Endothelial cell of umbilical vein (primary cell): ENCODE measurements at regions of chr11 and their contacts with region 1.

Region 1: DNA sequence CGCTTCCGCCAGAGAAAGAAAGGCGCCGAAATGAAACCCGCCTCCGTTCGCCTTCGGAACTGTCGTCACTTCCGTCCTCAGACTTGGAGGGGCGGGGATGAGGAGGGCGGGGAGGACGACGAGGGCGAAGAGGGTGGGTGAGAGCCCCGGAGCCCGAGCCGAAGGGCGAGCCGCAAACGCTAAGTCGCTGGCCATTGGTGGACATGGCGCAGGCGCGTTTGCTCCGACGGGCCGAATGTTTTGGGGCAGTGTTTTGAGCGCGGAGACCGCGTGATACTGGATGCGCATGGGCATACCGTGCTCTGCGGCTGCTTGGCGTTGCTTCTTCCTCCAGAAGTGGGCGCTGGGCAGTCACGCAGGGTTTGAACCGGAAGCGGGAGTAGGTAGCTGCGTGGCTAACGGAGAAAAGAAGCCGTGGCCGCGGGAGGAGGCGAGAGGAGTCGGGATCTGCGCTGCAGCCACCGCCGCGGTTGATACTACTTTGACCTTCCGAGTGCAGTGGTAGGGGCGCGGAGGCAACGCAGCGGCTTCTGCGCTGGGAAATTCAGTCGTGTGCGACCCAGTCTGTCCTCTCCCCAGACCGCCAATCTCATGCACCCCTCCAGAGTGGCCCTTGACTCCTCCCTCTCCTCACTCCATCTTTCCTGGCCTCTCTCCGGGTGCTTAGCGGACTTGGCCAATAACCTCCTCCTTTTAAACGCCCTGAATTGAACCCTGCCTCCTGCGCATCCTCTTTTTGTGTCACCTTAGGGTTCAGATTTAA is at the start of gene ATM:
- DNase-seq: peak; percentile 100
- H3K4me3 ChIP-seq: peak within 1 kb of the TSS; percentile 43 to 88 (median 64)
- H3K27ac ChIP-seq: peak within 1 kb of the TSS; percentile 85
- H3K4me1 ChIP-seq: peaks cover 27% of the 10 kb centered on the region
- H3K27me3 ChIP-seq: no peaks in the 10 kb centered on the region
- CTCF ChIP-seq: peak; percentile 86 to 92
- POLR2A ChIP-seq: peak; percentile 87
- total RNA-seq, gene ATM: 49.7 and 52.1 TPM in 2 replicates

Region 2: GRCh38 chr11:107988397-107989158 is 234.3 kb before region 1 on chr11:
- CTCF ChIA-PET with region 1: no interaction called
- POLR2A ChIA-PET with region 1: no interaction called
- dilution Hi-C with region 1: no loop called
- intact Hi-C with region 1: no loop called
- DNase-seq: no peak
- H3K4me3 ChIP-seq: no peak overlapping the region
- H3K27ac ChIP-seq: no peak overlapping the region
- H3K4me1 ChIP-seq: no peaks in the 10 kb centered on the region
- H3K27me3 ChIP-seq: no peaks in the 10 kb centered on the region
- CTCF ChIP-seq: no peak
- POLR2A ChIP-seq: no peak

Region 3: GRCh38 chr11:108008656-108009496 is 214.0 kb before region 1 on chr11 and contains the start of gene CUL5:
- CTCF ChIA-PET with region 1: no interaction called
- POLR2A ChIA-PET with region 1: no interaction called
- dilution Hi-C with region 1: no loop called
- intact Hi-C with region 1: loop called (anchors 1 kb)
- DNase-seq: peak; percentile 90
- H3K4me3 ChIP-seq: peak within 1 kb of the TSS; percentile 44 to 88 (median 60)
- H3K27ac ChIP-seq: peak within 1 kb of the TSS; percentile 75
- H3K4me1 ChIP-seq: peaks cover 12% of the 10 kb centered on the region
- H3K27me3 ChIP-seq: no peaks in the 10 kb centered on the region
- CTCF ChIP-seq: peak; percentile 91 to 96
- POLR2A ChIP-seq: peak; percentile 91
- total RNA-seq, gene CUL5: 36.6 and 37.6 TPM in 2 replicates

Region 4: DNA sequence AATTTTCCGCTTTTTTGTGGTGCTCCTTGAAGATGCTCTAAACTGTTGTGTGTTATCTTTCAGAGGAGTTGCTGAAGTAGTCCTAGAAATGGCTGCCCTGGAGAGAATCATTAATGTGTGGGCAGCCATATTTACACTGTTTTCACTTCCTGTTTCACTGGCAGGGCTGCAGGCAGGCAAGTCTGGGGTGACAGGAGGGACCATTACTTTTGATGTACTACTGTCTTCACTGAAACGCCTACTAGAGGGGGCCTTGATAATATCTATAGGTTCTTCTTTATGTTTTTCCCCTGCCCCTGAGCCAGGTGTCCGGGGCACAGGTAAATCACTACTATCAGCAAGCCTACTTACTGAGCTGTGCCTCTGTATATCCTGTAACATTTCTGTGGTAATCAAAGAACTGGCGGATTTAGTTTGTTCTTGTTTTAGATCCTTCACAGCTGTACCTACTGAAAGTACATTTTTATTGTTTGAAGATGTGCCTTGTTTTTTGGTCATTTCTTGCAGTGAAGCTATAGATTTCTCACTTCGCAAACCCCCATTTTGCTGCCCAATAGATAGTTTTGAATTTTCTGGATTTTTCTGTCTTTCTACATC is 61.8 kb before region 1 on chr11:
- CTCF ChIA-PET with region 1: no interaction called
- POLR2A ChIA-PET with region 1: no interaction called
- dilution Hi-C with region 1: no loop called
- intact Hi-C with region 1: no loop called
- DNase-seq: no peak
- H3K4me3 ChIP-seq: no peak overlapping the region
- H3K27ac ChIP-seq: no peak overlapping the region
- H3K4me1 ChIP-seq: no peaks in the 10 kb centered on the region
- H3K27me3 ChIP-seq: no peaks in the 10 kb centered on the region
- CTCF ChIP-seq: no peak
- POLR2A ChIP-seq: no peak

Region 5: DNA sequence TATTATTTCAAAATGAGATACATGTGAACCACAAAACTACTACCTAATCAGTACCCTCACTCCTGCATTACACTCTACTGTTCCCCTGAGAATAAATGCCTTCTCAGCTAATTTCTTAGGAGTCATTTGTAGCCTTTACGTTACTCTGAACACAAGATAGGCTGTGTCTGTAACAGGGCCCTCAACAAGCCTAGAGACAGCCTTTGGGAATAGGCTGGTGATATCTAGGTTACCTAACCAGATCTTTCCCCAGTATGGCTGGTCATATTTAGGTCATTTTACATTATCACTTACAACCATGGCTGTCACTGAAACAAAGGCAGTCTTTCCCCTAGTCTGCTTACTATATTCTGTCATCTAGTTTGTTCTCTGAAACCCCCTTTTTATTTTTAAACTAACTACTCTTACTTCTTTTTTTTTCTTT is 14.2 kb after region 1 on chr11:
- CTCF ChIA-PET with region 1: interaction called, 8 read pairs
- POLR2A ChIA-PET with region 1: no interaction called
- dilution Hi-C with region 1: no loop called
- intact Hi-C with region 1: loop called (anchors 1 kb)
- DNase-seq: no peak
- H3K4me3 ChIP-seq: no peak overlapping the region
- H3K27ac ChIP-seq: peak overlapping the region; percentile 94
- H3K4me1 ChIP-seq: peaks cover 16% of the 10 kb centered on the region
- H3K27me3 ChIP-seq: no peaks in the 10 kb centered on the region
- CTCF ChIP-seq: no peak
- POLR2A ChIP-seq: no peak

Region 6: GRCh38 chr11:108278546-108278945 is 55.7 kb after region 1 on chr11:
- CTCF ChIA-PET with region 1: interaction called, 4 read pairs
- POLR2A ChIA-PET with region 1: no interaction called
- dilution Hi-C with region 1: no loop called
- intact Hi-C with region 1: loop called (anchors 2 kb)
- DNase-seq: no peak
- H3K4me3 ChIP-seq: no peak overlapping the region
- H3K27ac ChIP-seq: no peak overlapping the region
- H3K4me1 ChIP-seq: no peaks in the 10 kb centered on the region
- H3K27me3 ChIP-seq: no peaks in the 10 kb centered on the region
- CTCF ChIP-seq: no peak
- POLR2A ChIP-seq: no peak

Region 7: DNA sequence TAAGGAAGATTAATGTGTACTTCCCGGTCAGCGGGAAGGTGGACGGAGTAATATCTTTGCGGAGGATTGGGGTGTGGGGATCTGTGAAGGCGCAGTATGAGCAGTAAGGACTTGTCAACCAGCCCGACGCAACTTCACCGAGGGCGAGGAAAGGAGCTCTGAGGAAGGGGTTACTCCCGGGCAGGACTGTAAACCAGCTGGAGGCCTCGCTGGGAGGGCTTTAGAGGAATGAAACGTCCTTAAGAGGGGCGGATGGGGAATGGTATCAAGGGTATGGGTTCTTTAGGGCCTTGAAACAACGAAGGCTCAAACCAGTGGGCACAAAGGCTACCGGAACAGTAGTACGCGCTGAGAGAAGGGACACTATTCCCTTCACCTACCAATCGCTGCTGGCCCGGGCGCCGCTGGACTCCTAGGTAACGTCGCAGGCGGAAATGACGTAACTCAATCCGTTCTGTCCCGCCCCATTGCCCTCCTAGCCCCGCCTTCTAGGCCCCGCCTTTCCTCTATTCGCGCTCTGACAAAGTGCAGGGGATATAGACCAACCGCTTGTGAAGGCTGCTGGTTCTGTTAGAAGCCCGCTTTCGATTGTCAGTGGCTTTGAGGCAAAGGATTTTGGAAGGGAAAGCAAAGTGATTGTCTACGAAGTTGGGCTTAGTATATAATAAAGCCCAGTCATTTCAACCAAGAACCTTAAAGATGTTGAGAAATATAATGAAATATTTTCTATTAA is 244.4 kb after region 1 on chr11 and contains the start of gene C11orf65:
- CTCF ChIA-PET with region 1: interaction called, 3 read pairs
- POLR2A ChIA-PET with region 1: no interaction called
- dilution Hi-C with region 1: no loop called
- intact Hi-C with region 1: loop called (anchors 1 kb)
- DNase-seq: peak; percentile 99
- H3K4me3 ChIP-seq: peak within 1 kb of the TSS; percentile 38 to 86 (median 62)
- H3K27ac ChIP-seq: peak within 1 kb of the TSS; percentile 97
- H3K4me1 ChIP-seq: peaks cover 3% of the 10 kb centered on the region
- H3K27me3 ChIP-seq: no peaks in the 10 kb centered on the region
- CTCF ChIP-seq: no peak
- POLR2A ChIP-seq: peak; percentile 97
- total RNA-seq, gene C11orf65: not detected in 2 replicates

Region 8: DNA sequence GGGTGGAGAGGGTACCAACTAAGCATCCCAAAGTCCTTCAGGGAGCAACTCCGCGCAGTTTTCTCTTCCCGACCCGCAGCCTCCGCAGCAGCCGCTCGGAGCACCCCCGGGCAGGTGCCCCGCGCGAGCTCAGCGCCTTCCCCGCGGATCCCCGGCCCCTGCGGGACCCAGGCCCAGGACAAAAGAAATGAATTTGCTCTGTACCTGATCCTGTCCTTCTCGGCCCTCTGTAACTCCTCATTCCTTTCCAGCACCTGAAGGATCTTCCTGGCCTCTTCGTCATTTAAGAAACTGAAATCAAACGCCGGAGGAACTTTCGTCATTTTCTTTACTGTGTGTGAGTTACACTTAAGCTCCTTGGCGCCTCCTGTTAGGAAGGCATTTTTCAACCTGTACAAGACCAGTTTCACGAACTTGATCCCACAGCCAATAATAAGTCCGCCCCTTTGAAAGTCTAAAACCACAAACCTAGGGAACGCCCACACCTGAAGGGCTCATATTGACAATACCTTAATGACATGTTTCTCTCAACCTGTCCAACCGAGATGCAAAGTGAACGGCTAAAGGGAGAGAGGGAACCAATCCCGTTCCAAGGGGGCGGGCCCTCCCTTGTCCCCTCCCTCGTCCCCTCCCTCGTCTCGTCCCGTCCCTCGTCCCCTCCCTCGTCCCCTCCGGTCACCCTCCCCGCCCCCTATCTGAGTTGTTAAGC is 370.5 kb after region 1 on chr11 and contains the start of gene EXPH5:
- CTCF ChIA-PET with region 1: no interaction called
- POLR2A ChIA-PET with region 1: no interaction called
- dilution Hi-C with region 1: no loop called
- intact Hi-C with region 1: loop called (anchors 5 kb)
- DNase-seq: peak; percentile 80
- H3K4me3 ChIP-seq: peak within 1 kb of the TSS; percentile 47 to 96 (median 81)
- H3K27ac ChIP-seq: no peak within 1 kb of the TSS
- H3K4me1 ChIP-seq: peaks cover 3% of the 10 kb centered on the region
- H3K27me3 ChIP-seq: peaks cover 24 to 35% of the 10 kb centered on the region in 2 experiments
- CTCF ChIP-seq: no peak
- POLR2A ChIP-seq: no peak
- total RNA-seq, gene EXPH5: 0.09 TPM in 1 of 2 replicates, not detected in the other

Region 9: GRCh38 chr11:108733479-108734116 is 510.7 kb after region 1 on chr11:
- CTCF ChIA-PET with region 1: no interaction called
- POLR2A ChIA-PET with region 1: no interaction called
- dilution Hi-C with region 1: no loop called
- intact Hi-C with region 1: loop called (anchors 5 kb)
- DNase-seq: peak; percentile 63
- H3K4me3 ChIP-seq: no peak overlapping the region
- H3K27ac ChIP-seq: peak overlapping the region; percentile 52
- H3K4me1 ChIP-seq: peaks cover 23% of the 10 kb centered on the region
- H3K27me3 ChIP-seq: no peaks in the 10 kb centered on the region
- CTCF ChIP-seq: no peak
- POLR2A ChIP-seq: no peak